Vagina (tissue), 2 donors: ENCODE measurements at regions of chr3 and their contacts with region 1.

Region 1: GRCh38 chr3:121018917-121019321 is 110.9 kb downstream of the STXBP5L start:
- DNase-seq: no peak
- H3K4me3 ChIP-seq: no peak overlapping the region
- H3K27ac ChIP-seq: no peak overlapping the region
- H3K4me1 ChIP-seq: no peaks in the 10 kb centered on the region
- H3K27me3 ChIP-seq: no peaks in the 10 kb centered on the region
- CTCF ChIP-seq: no peak
- POLR2A ChIP-seq: no peak

Region 2: DNA sequence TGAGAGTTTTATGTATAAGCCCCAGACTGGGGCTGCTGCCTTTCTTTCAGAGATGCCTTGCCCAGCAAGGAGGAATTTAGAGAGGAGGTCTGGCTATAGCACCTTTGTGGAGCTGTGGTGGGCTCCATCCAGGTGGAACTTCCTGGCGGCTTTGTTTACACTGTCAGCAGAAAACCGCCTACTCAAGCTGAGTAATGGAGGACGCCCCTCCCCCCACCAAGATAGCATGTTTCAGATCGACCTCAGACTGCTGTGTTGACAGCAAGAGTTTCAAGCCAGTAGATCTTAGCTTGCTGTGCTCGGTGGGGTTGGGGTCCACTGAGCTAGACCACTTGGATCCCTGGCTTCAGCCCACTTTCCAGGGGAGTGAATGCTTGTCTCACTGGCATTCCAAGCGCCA is 44.7 kb after region 1 on chr3:
- intact Hi-C with region 1: loop called (anchors 10 kb)
- DNase-seq: no peak
- H3K4me3 ChIP-seq: no peak overlapping the region
- H3K27ac ChIP-seq: no peak overlapping the region
- H3K4me1 ChIP-seq: no peaks in the 10 kb centered on the region
- H3K27me3 ChIP-seq: no peaks in the 10 kb centered on the region
- CTCF ChIP-seq: no peak
- POLR2A ChIP-seq: no peak